ENCODE measurements at regions of chr2 and their contacts with region 1.

Region 1: DNA sequence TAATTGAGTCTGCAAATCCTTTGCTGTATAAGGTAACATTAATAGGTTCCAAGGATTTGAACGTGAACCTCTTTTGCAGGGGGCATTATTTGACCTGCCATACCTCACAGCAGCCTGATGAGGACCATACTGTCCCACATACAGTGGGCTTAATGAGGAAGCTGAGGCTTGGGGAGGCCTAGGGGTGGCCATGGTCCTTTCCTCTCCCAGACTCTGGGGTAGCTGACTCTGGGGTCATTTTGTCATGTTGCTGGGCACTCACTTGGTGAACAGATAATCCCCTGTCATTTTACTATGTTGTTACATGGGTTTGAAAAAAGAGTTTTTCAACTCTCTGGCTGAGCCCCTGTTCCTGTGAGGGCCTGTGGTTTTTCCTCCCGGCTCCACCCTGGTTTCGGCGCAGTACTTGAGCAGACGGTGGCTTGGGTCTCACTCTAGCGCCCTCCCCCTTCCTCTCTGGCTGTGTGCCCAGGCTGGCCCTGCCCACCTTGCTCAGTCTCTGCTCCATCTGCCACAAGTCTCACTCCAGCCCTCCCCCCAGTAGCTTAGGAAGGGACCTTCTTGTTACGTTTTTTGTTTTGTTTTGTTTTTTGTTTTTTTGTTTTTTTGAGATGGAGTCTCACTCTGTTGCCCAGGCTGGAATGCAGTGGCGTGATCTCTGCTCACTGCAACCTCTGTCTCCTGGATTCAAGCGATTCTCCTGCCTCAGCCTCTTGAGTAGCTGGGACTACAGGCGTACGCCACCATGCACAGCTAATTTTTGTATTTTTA is 21.0 kb downstream of the INPP4A start:
- DNase-seq: peak; percentile 73
- H3K4me3 Mint-ChIP-seq: peak overlapping the region; percentile 77
- H3K27ac Mint-ChIP-seq: peak overlapping the region; percentile 95
- H3K4me1 Mint-ChIP-seq: peaks cover 82% of the 10 kb centered on the region
- H3K27me3 Mint-ChIP-seq: no peaks in the 10 kb centered on the region

Region 2: DNA sequence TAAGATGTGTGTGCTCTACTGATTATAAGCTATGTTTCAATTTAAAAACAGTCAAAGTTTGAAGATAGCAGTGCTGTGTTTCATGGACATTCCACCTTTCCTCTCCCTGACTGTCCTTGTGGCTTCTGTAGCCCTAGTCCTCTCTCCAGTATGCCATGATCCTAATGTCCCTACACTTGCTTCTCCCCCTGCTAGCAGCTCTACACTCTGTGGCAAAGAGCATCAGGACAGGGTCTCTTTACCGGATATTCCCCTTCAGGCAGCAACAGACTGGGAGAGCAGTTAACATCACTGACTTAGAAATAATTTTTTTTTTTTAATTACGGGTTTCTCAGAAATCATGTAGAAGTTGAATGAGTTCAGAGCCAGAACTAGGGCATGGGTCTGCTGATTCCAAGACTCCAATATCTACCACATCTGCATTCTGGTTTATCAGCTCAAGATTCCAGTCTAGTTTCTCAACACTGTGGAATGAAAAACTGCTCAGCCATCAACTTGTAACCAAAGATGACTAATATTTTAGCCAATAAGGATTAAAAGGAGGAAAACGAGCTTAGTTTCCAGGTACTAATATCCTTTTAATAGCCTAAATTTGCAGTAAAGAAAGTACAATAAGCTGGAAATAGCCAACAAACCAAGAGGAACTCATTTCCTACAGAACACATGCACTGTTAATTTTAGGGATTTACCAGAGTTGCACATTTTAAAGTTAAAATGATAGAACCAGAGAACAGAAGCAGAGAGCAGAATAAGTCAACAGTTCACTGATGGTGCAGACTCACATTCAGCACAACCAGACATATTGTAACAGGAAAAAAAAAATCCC is 515.1 kb before region 1 on chr2:
- intact Hi-C with region 1: no loop called
- DNase-seq: no peak
- H3K4me3 Mint-ChIP-seq: no peak overlapping the region
- H3K27ac Mint-ChIP-seq: no peak overlapping the region
- H3K4me1 Mint-ChIP-seq: peaks cover 26% of the 10 kb centered on the region
- H3K27me3 Mint-ChIP-seq: no peaks in the 10 kb centered on the region

Region 3: DNA sequence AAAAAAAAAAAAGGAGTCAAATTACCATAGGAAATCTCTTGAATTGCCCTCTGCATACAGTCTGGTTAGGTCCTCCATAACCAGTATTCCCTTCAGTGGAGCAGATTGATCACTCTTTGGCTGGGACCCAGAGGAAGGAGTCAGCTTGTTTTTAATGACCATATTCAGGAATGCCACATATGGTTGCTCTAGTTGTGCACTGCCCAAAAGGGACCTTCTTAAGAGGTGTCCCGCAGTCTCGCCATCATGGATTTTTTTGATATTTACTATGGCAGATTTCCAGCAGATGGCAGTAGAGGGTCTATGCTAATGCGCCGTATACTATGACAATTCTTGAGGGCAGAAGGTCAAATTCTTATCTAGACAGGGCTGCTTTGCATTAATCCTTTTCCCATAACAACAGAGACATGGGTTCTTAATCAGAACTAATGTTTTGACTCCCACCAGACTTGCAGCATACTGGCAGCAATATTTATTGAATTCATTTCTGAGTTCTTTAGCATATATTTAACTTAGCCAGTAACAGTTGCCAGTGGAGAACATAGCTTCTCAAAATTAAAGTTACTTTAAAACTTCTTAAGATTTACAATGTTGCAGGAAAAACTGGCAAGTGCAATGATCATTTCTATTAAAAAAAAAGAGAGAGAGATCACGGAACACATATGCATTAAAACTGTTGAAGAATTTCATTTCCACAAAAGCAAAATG is 52.7 kb before region 1 on chr2:
- intact Hi-C with region 1: no loop called
- DNase-seq: peak; percentile 43
- H3K4me3 Mint-ChIP-seq: no peak overlapping the region
- H3K27ac Mint-ChIP-seq: no peak overlapping the region
- H3K4me1 Mint-ChIP-seq: peaks cover 8% of the 10 kb centered on the region
- H3K27me3 Mint-ChIP-seq: peaks cover 9% of the 10 kb centered on the region

Region 4: GRCh38 chr2:98426771-98427170 is 38.9 kb before region 1 on chr2:
- intact Hi-C with region 1: no loop called
- DNase-seq: no peak
- H3K4me3 Mint-ChIP-seq: no peak overlapping the region
- H3K27ac Mint-ChIP-seq: no peak overlapping the region
- H3K4me1 Mint-ChIP-seq: no peaks in the 10 kb centered on the region
- H3K27me3 Mint-ChIP-seq: peaks cover 21% of the 10 kb centered on the region

Region 5: DNA sequence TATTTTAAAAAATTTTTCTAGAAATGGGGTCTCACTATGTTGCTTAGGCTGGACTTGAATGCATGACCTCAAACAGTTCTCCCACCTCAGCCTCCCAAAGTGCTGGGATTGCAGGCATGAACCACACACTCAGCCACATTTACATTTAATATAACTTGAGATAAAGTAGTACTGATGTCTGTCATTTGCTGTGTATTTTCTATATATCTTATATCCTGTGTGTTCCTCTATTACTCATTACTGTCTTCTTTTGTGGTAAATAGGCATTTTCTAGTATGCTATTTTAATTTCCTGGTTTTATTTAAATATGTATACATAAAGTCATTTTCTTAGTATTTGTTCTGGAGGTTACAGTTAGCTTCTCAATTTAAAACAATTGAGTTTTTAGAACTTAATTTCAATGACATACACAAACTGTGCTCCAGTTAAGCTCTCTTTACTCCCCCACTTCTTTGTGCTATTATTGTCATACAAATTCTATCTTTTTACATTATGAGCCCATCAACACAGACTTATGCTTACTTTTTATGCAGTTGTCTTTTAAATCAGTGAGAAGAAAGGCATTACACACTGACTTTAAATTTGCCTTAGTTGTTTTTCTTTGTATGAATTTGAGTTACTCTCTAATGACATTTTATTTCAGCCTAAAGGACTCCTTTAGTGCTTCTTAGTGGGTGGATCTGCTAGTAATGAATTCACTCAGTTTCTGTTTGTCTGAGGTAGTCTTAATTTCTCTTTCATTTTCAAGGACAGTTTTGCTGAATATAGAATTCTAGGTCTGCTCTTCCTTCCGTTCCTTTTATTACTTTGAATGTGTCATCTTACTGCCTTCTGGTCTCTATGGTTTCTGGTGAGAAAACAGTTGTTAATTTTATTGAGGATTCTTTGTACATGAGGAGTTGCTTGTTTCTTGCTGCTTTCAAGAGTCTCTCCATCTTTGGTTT is 27.2 kb before region 1 on chr2:
- intact Hi-C with region 1: loop called (anchors 1 kb)
- DNase-seq: peak; percentile 4
- H3K4me3 Mint-ChIP-seq: peak overlapping the region; percentile 61
- H3K27ac Mint-ChIP-seq: peak overlapping the region; percentile 93
- H3K4me1 Mint-ChIP-seq: peaks cover 25% of the 10 kb centered on the region
- H3K27me3 Mint-ChIP-seq: no peaks in the 10 kb centered on the region

Region 6: DNA sequence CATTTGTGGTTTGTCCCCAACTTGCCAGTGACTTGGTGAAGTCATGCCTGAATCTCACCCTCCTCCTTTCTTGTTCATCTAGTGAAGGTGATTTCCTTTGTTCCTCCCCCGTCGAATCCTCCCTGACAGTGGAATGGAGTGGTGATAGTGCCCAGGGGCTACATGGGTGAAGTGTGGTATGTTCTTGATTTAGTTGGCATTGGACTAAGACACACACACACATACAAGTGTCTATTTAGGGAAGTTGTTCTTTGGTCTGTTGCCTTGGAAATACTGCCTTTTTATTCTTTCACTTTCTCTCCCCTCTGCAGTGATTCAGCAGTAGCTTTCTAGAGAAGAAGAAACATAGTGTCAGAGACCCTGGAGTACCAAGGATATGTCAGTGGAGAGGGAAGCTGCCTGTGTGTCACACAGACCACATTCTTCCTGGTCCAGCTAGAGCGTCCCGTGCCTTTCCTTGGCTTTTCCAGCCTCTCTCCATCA is 10.1 kb before region 1 on chr2:
- intact Hi-C with region 1: loop called (anchors 1 kb)
- DNase-seq: peak; percentile 52
- H3K4me3 Mint-ChIP-seq: peak overlapping the region; percentile 59
- H3K27ac Mint-ChIP-seq: peak overlapping the region; percentile 91
- H3K4me1 Mint-ChIP-seq: peaks cover 92% of the 10 kb centered on the region
- H3K27me3 Mint-ChIP-seq: no peaks in the 10 kb centered on the region

Region 7: DNA sequence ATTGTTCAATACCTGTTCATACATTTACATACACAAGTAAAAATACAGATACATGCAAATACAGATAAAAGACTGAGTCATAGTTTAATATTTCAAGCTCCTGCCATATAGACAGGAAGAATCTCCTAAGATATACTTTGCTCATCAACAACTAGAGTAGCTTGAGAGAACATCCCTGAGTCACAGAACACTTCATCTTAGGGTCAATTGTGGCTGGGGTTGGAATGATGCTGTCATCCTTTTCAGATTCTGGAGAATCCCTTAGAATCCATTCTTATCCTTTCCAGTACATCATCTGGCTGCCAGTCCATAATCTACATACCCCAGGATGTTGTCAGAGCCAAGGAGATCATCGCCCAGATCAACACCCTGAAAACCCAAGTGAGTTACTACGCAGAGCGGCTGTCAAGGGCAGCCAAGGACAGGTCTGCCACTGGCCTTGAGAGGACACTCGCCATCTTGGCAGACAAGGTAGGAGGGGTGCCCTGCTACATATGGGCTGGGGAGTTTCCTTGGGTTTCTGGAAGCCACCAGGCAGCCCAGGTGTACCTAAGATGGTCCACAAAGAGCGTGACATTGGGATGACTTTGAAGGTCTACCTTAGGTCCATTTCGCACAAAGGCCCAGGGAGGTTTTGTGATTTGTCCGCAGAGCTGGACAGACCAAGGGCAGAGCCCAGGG is 87.0 kb after region 1 on chr2:
- intact Hi-C with region 1: loop called (anchors 5 kb)
- DNase-seq: no peak
- H3K4me3 Mint-ChIP-seq: no peak overlapping the region
- H3K27ac Mint-ChIP-seq: peak overlapping the region; percentile 51
- H3K4me1 Mint-ChIP-seq: peaks cover 41% of the 10 kb centered on the region
- H3K27me3 Mint-ChIP-seq: no peaks in the 10 kb centered on the region

Region 8: GRCh38 chr2:98608116-98608999 is 142.7 kb after region 1 on chr2 and contains the starts of genes COA5 and UNC50:
- intact Hi-C with region 1: loop called (anchors 5 kb)
- DNase-seq: peak; percentile 90
- H3K4me3 Mint-ChIP-seq: peak within 1 kb of the TSS; percentile 93
- H3K27ac Mint-ChIP-seq: peak within 1 kb of the TSS; percentile 86
- H3K4me1 Mint-ChIP-seq: peaks cover 56% of the 10 kb centered on the region
- H3K27me3 Mint-ChIP-seq: no peaks in the 10 kb centered on the region
- total RNA-seq, gene COA5: 20.9 and 23.9 TPM in 2 replicates
- total RNA-seq, gene UNC50: 39.6 and 40.1 TPM in 2 replicates

Region 9: GRCh38 chr2:98676742-98677141 is 211.1 kb after region 1 on chr2:
- intact Hi-C with region 1: no loop called
- DNase-seq: no peak
- H3K4me3 Mint-ChIP-seq: no peak overlapping the region
- H3K27ac Mint-ChIP-seq: no peak overlapping the region
- H3K4me1 Mint-ChIP-seq: peaks cover 13% of the 10 kb centered on the region
- H3K27me3 Mint-ChIP-seq: no peaks in the 10 kb centered on the region

Region 10: DNA sequence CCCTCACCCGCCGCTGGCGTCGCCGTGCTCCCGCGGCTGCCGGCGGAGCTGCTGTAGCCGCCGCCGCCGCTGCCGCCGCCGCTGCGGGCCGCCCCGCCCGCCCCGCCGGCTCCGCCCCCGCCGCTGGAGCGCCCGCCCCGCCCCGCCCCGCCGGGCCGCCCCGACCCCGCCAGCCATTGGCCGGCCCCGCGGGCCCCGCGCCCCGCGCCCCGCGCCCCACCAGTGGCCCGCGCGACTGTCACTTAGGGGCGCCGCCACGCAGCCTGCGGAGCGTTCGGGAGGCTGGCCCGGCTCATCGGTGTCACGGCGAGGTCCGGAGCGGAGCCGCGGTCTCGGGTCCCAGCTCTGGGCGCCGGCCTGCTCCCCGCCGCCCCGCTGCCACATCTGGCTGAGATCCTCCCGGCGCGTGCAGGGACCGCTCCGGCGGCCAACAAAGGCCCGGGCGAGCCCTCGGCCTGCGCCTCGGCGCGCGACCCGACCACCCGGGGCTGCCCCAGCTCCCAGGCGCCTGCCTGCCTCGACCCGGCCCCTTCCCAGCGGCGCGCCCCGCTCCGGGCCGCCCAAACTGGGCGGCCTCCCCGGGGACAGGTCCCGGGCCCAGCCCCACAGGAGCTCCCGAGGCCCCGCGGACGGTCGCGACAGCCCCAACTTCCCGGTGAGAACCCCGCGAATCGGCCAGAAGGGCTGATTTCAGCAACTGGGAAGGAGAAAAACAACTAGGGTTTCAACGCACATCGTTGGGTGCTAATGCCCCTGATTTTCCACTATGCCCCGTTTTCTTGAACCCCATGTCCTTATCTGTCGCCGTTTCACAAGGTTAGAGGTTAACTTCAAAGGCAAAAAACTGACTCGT is 265.6 kb after region 1 on chr2 and contains the start of gene MGAT4A:
- intact Hi-C with region 1: loop called (anchors 10 kb)
- DNase-seq: peak; percentile 76
- H3K4me3 Mint-ChIP-seq: peak within 1 kb of the TSS; percentile 88
- H3K27ac Mint-ChIP-seq: peak within 1 kb of the TSS; percentile 93
- H3K4me1 Mint-ChIP-seq: peaks cover 71% of the 10 kb centered on the region
- H3K27me3 Mint-ChIP-seq: no peaks in the 10 kb centered on the region
- total RNA-seq, gene MGAT4A: 42.0 and 44.6 TPM in 2 replicates